Naive thymus-derived CD4-positive, alpha-beta T cell (primary cell): ENCODE measurements at regions of chrX and their contacts with region 1.

Region 1: GRCh38 chrX:65528705-65529340 is 5.8 kb downstream of the LAS1L start:
- DNase-seq: peak in 8 of 9 donors; percentile 24 to 63 (median 46)
- ATAC-seq: peak; percentile 75
- H3K4me3 ChIP-seq: no peak overlapping the region
- H3K4me3 Mint-ChIP-seq: no peak overlapping the region
- H3K27ac ChIP-seq: no peak overlapping the region
- H3K27ac Mint-ChIP-seq: peak overlapping the region in 2 of 9 donors; percentile 51
- H3K4me1 ChIP-seq: peaks cover 6 to 12% of the 10 kb centered on the region in 2 donors
- H3K4me1 Mint-ChIP-seq: peaks cover 5 to 19% (median 11%) of the 10 kb centered on the region in 7 donors
- H3K27me3 ChIP-seq: no peaks in the 10 kb centered on the region
- H3K27me3 Mint-ChIP-seq: no peaks in the 10 kb centered on the region

Region 2: GRCh38 chrX:64093761-64094160 is 1435.1 kb before region 1 on chrX:
- CTCF ChIA-PET with region 1: interaction called, 3 read pairs
- POLR2A ChIA-PET with region 1: no interaction called
- intact Hi-C with region 1: loop called in 1 of 2 experiments (anchors 5 kb)
- DNase-seq: peak in 1 of 9 donors; percentile 0
- ATAC-seq: no peak
- H3K4me3 ChIP-seq: no peak overlapping the region
- H3K4me3 Mint-ChIP-seq: no peak overlapping the region
- H3K27ac ChIP-seq: no peak overlapping the region
- H3K27ac Mint-ChIP-seq: no peak overlapping the region
- H3K4me1 ChIP-seq: no peaks in the 10 kb centered on the region
- H3K4me1 Mint-ChIP-seq: no peaks in the 10 kb centered on the region
- H3K27me3 ChIP-seq: no peaks in the 10 kb centered on the region
- H3K27me3 Mint-ChIP-seq: no peaks in the 10 kb centered on the region

Region 3: GRCh38 chrX:64758047-64758446 is 770.8 kb before region 1 on chrX:
- CTCF ChIA-PET with region 1: interaction called, 3 read pairs
- POLR2A ChIA-PET with region 1: no interaction called
- intact Hi-C with region 1: loop called in 1 of 2 experiments (anchors 2 kb)
- DNase-seq: no peak
- ATAC-seq: no peak
- H3K4me3 ChIP-seq: no peak overlapping the region
- H3K4me3 Mint-ChIP-seq: no peak overlapping the region
- H3K27ac ChIP-seq: no peak overlapping the region
- H3K27ac Mint-ChIP-seq: no peak overlapping the region
- H3K4me1 ChIP-seq: peaks cover 3 to 5% of the 10 kb centered on the region in 2 donors
- H3K4me1 Mint-ChIP-seq: peaks cover 0 to 27% (median 14%) of the 10 kb centered on the region in 7 donors
- H3K27me3 ChIP-seq: no peaks in the 10 kb centered on the region
- H3K27me3 Mint-ChIP-seq: no peaks in the 10 kb centered on the region

Region 4: GRCh38 chrX:64894454-64895038 is 634.3 kb before region 1 on chrX:
- CTCF ChIA-PET with region 1: no interaction called
- POLR2A ChIA-PET with region 1: no interaction called
- intact Hi-C with region 1: loop called in 1 of 2 experiments (anchors 2 kb)
- DNase-seq: peak in 6 of 9 donors; percentile 14 to 29 (median 23)
- ATAC-seq: no peak
- H3K4me3 ChIP-seq: no peak overlapping the region
- H3K4me3 Mint-ChIP-seq: no peak overlapping the region
- H3K27ac ChIP-seq: no peak overlapping the region
- H3K27ac Mint-ChIP-seq: peak overlapping the region in 2 of 9 donors; percentile 8 to 73
- H3K4me1 ChIP-seq: no peaks in the 10 kb centered on the region
- H3K4me1 Mint-ChIP-seq: peaks cover 0 to 31% (median 7%) of the 10 kb centered on the region in 7 donors
- H3K27me3 ChIP-seq: no peaks in the 10 kb centered on the region
- H3K27me3 Mint-ChIP-seq: no peaks in the 10 kb centered on the region

Region 5: GRCh38 chrX:65502618-65503017 is 26.2 kb before region 1 on chrX:
- CTCF ChIA-PET with region 1: no interaction called
- POLR2A ChIA-PET with region 1: no interaction called
- intact Hi-C with region 1: no loop called
- DNase-seq: no peak
- ATAC-seq: no peak
- H3K4me3 ChIP-seq: no peak overlapping the region
- H3K4me3 Mint-ChIP-seq: no peak overlapping the region
- H3K27ac ChIP-seq: no peak overlapping the region
- H3K27ac Mint-ChIP-seq: no peak overlapping the region
- H3K4me1 ChIP-seq: no peaks in the 10 kb centered on the region
- H3K4me1 Mint-ChIP-seq: no peaks in the 10 kb centered on the region
- H3K27me3 ChIP-seq: no peaks in the 10 kb centered on the region
- H3K27me3 Mint-ChIP-seq: no peaks in the 10 kb centered on the region

Region 6: DNA sequence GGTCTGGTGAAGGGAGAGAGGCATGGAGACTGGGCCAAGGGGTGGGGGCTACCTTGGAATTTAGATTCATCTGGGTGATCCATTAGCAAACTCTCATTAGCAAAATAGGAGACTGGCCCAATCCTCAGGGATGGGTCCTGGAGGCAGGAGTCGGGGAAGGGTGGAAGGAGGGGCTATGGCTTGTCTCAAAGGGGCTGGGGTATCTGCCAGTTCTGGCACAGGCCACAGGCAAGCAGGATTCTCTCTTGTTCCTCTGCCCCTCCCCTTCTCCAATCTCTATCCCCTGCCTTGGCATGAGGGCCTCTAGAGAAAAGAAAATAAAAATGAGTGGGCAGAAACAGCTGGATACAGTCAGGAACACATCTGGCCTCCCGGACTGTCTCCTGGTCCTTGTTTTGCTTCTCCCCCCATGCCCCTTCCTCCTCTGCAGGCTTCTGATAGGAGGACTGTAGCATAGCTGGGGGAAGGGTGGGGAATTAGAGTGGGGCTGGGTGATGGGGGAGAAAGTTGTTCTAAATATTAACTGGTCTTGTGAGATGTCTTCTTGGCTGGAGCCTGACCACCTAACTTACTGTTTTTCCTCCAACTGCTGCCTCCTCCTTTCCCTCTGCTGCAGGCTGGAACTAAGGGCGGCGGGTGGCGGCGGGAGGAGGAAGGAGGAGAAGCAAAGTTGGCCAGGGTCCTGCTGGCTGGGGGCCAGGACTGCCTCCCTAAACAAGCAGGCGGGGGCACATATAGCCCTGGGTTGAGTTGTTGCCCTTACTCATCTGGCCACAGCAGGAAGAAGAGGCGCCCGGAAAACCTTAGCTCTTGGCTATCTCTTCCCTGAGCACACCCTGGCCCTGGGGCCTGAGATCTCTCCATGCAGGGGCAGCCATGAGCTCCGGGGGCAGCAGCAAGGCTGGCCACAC is 59.0 kb after region 1 on chrX:
- CTCF ChIA-PET with region 1: no interaction called
- POLR2A ChIA-PET with region 1: no interaction called
- intact Hi-C with region 1: no loop called
- DNase-seq: no peak
- ATAC-seq: no peak
- H3K4me3 ChIP-seq: no peak overlapping the region
- H3K4me3 Mint-ChIP-seq: no peak overlapping the region
- H3K27ac ChIP-seq: no peak overlapping the region
- H3K27ac Mint-ChIP-seq: no peak overlapping the region
- H3K4me1 ChIP-seq: no peaks in the 10 kb centered on the region
- H3K4me1 Mint-ChIP-seq: peaks cover 0 to 9% (median 0%) of the 10 kb centered on the region in 7 donors
- H3K27me3 ChIP-seq: no peaks in the 10 kb centered on the region
- H3K27me3 Mint-ChIP-seq: no peaks in the 10 kb centered on the region